GM13977 (cell line): ENCODE measurements at regions of chr20 and their contacts with region 1.

Region 1: DNA sequence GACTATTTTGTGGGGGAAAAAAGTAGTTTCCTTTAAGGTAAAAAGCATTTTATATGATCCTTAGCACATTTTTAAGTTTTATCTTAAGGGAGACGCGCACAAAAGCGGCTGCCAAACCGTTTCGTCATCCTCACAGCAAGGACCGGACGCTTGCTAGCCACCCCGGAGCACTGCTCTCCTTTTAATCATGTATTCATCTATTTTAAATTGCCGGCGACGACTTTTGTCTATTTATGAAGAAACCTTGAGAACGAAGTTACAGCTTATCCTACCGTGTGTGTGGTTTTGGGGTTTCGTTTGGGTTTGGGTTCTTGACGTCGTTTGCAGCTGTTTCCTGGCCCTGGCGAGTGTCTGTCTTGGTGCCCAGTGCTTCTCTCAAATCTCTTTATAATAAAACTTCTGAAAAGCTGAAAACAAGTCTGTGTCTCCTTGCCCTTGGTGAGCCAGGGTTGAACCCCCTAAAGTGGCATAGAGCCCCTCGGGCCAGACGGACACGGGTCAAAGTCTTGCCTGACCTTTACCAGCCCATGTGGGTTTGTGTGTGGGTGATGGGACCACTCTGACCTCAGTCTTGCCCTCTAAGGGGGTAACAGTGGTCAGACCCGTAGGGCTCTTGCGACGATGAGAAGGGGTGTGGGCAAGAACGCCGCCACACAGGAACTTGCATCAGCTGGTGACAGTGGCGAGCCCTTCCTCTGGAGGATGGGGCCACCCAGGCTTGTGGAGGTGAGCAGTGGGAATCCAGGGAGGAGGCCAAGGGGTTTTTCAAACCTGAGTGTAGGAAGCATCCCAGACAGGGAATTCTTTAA is 117.6 kb downstream of the JPH2 start:
- DNase-seq: peak; percentile 75
- CTCF ChIP-seq: no peak

Region 2: GRCh38 chr20:43840382-43841070 is 228.9 kb before region 1 on chr20:
- in situ Hi-C with region 1: loop called (anchors 10 kb)
- DNase-seq: peak; percentile 74
- CTCF ChIP-seq: peak; percentile 68

Region 3: DNA sequence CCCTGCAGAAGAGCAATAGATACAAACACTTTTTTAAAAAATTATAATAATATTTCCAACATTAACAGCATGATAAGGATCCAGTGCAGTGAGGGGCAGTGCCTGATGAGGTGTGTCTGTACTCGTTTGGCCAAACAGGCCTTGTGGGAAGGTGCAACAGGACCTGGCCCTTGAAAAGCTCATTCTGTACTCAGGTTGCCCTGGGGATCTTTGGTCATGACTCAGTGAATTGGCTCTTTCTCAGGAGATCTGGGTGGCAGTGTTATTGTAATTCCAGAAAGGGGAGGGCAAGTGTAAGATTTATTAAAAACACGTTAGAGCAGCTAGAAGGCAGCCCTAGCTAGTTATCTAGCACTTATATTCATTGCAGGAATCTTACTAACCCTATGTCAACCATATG is 1448.9 kb after region 1 on chr20:
- in situ Hi-C with region 1: no loop called
- DNase-seq: no peak
- CTCF ChIP-seq: no peak